ENCODE measurements at regions of chrX and their contacts with region 1.

Region 1: DNA sequence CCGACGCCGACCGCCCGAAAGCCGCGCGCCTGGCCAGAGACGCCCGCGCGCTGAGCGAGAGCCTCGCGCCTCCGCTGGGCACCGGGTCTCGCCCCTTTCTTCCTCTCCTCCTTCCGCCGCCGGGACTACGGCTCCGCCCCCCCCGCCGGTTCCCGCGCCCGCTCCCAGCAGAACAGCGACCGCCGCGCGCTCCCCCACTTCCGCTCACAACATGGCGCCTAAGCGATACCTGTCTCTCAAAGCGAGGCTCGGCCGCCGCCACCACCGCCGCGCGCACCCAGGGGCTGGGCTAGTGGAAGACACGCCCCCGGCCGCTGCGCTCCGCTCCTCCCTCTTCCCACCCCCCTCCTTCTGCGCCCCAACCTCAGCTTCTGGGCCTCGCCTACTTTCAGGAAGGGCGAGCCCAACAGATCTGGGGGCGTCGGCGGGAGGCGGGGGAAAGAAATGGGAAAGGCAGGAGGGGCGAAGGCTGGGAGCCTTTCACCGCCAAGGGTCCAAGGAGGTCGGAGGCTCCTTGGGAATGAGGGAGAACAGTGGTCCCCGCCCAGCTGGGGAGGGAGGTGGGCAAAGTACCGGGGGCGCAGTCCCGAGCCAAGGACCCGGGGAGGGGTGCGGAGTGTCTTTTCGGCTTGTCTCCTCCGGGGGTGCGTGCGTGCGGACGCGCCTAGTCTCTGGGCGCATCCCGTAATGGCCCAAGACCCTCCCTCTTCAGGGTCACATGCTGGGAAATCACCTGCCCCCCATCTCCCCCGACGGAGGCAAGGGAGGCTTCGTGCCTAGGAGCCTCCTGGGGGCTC is at the start of gene RPS6KA3:
- DNase-seq: peak; percentile 91 to 92
- ATAC-seq: peak; percentile 89
- total RNA-seq, gene RPS6KA3: 88.6 to 93.7 TPM

Region 2: GRCh38 chrX:20378291-20378920 is 111.4 kb after region 1 on chrX:
- intact Hi-C with region 1: loop called in 1 of 2 experiments (anchors 10 kb)
- DNase-seq: peak; percentile 44 to 71
- ATAC-seq: peak; percentile 93

Region 3: DNA sequence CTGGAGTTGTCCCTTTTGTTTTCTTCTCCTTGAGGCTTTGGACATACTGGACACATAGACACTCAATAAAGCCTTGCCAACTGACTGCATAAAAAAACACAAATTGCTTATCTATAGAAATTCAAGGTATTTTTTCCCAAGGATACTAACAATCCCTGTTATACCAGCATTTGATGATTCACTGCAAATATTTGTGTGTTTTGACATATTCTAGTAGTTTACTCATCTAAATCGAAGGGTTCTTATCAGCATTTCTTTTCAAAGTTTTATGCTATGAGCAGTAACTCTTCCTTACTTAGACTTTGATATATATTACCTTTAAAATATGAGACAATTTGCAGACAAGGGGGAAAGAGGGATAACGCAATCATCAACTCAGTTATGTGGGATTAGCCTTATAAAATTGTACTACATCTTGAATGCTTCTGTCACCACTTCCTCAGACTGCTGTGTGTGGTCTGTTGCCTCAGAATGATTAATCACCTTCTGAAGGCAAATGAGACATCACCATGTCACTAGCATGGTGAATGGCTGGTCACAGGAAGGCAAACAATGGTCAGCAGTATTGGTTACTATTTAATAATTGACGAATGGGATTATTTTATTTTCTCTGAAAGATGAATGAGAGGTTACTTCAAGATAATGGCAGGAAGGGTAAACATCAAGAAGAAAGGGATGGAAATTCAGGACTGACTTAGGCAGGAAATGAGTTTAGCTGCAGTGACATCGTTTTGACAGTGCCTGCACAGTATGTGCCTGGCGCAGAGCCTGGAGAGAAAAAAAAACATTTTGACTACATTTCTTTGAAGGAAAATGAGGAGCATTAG is 562.9 kb after region 1 on chrX:
- intact Hi-C with region 1: no loop called
- DNase-seq: no peak
- ATAC-seq: no peak